CD4-positive, alpha-beta T cell (primary cell): ENCODE measurements at regions of chr5 and their contacts with region 1.

Region 1: DNA sequence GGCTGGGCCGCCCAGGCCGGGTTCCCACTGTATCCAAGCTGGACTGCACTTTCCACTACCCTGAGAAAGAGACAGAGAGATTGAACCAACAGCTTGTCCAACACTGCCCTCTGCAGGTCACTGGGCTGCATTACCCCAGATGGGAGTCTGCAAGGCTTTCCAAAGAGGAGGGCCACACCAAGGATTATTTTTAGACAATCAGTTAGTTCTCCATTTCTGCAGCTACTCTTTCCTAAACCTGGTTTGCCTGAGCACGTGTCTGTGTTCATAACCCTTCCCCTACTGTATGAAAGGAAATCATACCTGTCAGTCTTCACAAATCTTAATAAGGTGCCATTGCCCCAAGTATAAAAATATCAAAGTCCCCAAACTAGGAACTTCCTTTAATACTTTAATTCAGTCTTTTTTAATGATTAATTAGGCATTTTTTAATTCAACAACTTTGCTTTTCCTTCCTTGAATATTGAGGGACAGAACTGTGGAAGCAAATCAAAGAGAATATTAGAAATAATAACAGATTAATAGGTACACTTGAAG is 13.4 kb upstream of the FGF1 start:
- DNase-seq: peak; percentile 52 to 83 (median 72)
- ATAC-seq: peak; percentile 98
- H3K4me3 ChIP-seq: no peak overlapping the region
- H3K4me3 Mint-ChIP-seq: no peak overlapping the region
- H3K27ac ChIP-seq: no peak overlapping the region
- H3K27ac Mint-ChIP-seq: no peak overlapping the region
- H3K4me1 ChIP-seq: no peaks in the 10 kb centered on the region
- H3K4me1 Mint-ChIP-seq: no peaks in the 10 kb centered on the region
- H3K27me3 ChIP-seq: no peaks in the 10 kb centered on the region
- H3K27me3 Mint-ChIP-seq: no peaks in the 10 kb centered on the region
- CTCF ChIP-seq: peak; percentile 82

Region 2: DNA sequence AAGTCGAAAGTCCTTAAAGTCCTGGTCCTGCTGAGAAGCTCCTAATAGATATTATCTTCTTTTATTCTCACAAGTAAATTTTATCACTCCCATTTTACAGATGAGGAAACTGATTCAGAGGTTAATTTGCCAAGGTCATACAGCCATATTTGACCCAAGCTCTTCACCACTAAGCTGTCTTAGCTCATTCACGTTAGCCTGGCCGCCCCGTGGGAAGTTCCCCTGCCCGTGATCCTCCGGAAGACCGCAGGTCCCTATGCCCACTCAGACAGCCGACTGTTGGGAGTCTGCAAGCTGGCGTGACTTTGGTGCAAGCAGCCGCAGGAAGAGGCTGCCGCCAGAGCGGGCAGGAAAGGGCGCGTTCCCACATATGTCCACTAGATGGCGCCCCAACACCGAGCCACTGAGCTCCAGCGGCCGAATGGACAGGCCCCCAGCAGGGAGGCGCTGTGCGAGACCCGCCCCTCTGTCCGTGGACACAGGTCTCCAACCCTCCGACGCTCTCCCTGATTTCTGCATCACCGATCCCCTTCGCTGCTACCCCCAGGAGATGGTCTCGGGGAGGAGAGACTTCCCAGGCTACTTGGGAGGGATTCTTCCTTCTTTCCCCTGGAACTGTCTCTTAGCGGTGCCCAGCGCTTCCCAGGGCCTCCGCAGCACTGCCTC is 1007.3 kb before region 1 on chr5:
- CTCF ChIA-PET with region 1: no interaction called
- POLR2A ChIA-PET with region 1: no interaction called
- intact Hi-C with region 1: loop called (anchors 5 to 10 kb)
- DNase-seq: peak; percentile 66 to 92 (median 84)
- ATAC-seq: peak; percentile 68
- H3K4me3 ChIP-seq: peak overlapping the region; percentile 35
- H3K4me3 Mint-ChIP-seq: peak overlapping the region; percentile 57
- H3K27ac ChIP-seq: no peak overlapping the region
- H3K27ac Mint-ChIP-seq: no peak overlapping the region
- H3K4me1 ChIP-seq: peaks cover 20% of the 10 kb centered on the region
- H3K4me1 Mint-ChIP-seq: peaks cover 23% of the 10 kb centered on the region
- H3K27me3 ChIP-seq: no peaks in the 10 kb centered on the region
- H3K27me3 Mint-ChIP-seq: peaks cover 35% of the 10 kb centered on the region
- CTCF ChIP-seq: peak; percentile 98

Region 3: DNA sequence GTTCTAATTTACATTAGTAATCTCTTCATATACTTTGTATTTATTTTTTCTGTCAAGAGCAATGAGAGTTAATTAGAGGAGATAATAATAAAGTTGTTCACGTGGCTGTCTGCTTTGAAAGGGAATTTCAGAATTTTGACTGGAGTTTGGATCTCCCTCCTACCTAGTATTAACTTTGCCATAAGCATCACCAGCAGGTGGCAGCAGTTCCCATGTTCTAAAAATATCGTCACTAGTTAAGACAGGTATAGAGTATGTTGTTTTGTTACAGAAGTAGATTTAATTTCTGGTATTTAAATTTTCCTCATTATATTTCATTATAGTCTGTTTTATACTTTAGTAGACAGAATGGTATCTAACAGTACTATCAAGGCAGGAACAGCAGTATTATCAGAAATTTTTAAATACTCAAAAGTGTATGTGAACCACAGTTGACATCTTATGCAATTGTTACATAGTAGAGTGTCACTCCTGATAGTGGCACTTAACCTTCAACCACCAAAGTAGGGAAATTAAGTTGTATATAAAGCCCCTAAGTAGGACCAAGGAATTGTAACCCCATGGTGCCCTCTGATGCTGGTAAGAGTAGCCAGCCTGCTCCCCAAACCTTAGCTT is 706.8 kb before region 1 on chr5:
- CTCF ChIA-PET with region 1: interaction called, 3 read pairs
- POLR2A ChIA-PET with region 1: no interaction called
- intact Hi-C with region 1: loop called (anchors 1 to 2 kb)
- DNase-seq: peak; percentile 61 to 91 (median 78)
- ATAC-seq: peak; percentile 88
- H3K4me3 ChIP-seq: no peak overlapping the region
- H3K4me3 Mint-ChIP-seq: no peak overlapping the region
- H3K27ac ChIP-seq: no peak overlapping the region
- H3K27ac Mint-ChIP-seq: no peak overlapping the region
- H3K4me1 ChIP-seq: no peaks in the 10 kb centered on the region
- H3K4me1 Mint-ChIP-seq: peaks cover 6% of the 10 kb centered on the region
- H3K27me3 ChIP-seq: no peaks in the 10 kb centered on the region
- H3K27me3 Mint-ChIP-seq: no peaks in the 10 kb centered on the region
- CTCF ChIP-seq: peak; percentile 93

Region 4: GRCh38 chr5:142304013-142304701 is 395.1 kb before region 1 on chr5:
- CTCF ChIA-PET with region 1: no interaction called
- POLR2A ChIA-PET with region 1: no interaction called
- intact Hi-C with region 1: loop called in 1 of 2 experiments (anchors 10 kb)
- DNase-seq: no peak
- ATAC-seq: no peak
- H3K4me3 ChIP-seq: no peak overlapping the region
- H3K4me3 Mint-ChIP-seq: no peak overlapping the region
- H3K27ac ChIP-seq: no peak overlapping the region
- H3K27ac Mint-ChIP-seq: no peak overlapping the region
- H3K4me1 ChIP-seq: peaks cover 4% of the 10 kb centered on the region
- H3K4me1 Mint-ChIP-seq: peaks cover 10% of the 10 kb centered on the region
- H3K27me3 ChIP-seq: no peaks in the 10 kb centered on the region
- H3K27me3 Mint-ChIP-seq: no peaks in the 10 kb centered on the region
- CTCF ChIP-seq: no peak

Region 5: DNA sequence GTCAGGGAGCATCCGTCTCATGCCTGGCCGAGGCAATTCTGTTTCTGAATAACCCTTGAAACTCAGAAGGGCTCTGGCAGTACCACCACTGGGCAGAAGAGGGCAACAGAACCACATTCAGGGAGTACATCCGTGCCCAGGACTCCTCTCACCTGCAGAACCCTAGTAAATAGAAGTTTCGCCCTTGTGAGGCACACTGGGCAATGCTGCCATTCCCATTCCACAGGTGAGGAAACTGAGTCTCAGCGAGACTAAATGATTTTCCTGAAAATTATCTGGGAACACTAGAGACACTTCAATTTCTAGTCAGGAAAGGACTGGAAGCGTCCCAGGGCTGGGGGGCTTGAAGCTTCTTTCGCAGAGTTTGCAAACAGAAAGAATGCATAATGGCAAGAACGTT is 88.1 kb before region 1 on chr5:
- CTCF ChIA-PET with region 1: interaction called, 5 read pairs
- POLR2A ChIA-PET with region 1: no interaction called
- intact Hi-C with region 1: loop called (anchors 1 to 2 kb)
- DNase-seq: peak; percentile 34 to 70 (median 56)
- ATAC-seq: peak; percentile 94
- H3K4me3 ChIP-seq: no peak overlapping the region
- H3K4me3 Mint-ChIP-seq: no peak overlapping the region
- H3K27ac ChIP-seq: no peak overlapping the region
- H3K27ac Mint-ChIP-seq: no peak overlapping the region
- H3K4me1 ChIP-seq: no peaks in the 10 kb centered on the region
- H3K4me1 Mint-ChIP-seq: no peaks in the 10 kb centered on the region
- H3K27me3 ChIP-seq: peaks cover 0 to 3% of the 10 kb centered on the region in 2 experiments
- H3K27me3 Mint-ChIP-seq: peaks cover 34% of the 10 kb centered on the region
- CTCF ChIP-seq: peak; percentile 77

Region 6: DNA sequence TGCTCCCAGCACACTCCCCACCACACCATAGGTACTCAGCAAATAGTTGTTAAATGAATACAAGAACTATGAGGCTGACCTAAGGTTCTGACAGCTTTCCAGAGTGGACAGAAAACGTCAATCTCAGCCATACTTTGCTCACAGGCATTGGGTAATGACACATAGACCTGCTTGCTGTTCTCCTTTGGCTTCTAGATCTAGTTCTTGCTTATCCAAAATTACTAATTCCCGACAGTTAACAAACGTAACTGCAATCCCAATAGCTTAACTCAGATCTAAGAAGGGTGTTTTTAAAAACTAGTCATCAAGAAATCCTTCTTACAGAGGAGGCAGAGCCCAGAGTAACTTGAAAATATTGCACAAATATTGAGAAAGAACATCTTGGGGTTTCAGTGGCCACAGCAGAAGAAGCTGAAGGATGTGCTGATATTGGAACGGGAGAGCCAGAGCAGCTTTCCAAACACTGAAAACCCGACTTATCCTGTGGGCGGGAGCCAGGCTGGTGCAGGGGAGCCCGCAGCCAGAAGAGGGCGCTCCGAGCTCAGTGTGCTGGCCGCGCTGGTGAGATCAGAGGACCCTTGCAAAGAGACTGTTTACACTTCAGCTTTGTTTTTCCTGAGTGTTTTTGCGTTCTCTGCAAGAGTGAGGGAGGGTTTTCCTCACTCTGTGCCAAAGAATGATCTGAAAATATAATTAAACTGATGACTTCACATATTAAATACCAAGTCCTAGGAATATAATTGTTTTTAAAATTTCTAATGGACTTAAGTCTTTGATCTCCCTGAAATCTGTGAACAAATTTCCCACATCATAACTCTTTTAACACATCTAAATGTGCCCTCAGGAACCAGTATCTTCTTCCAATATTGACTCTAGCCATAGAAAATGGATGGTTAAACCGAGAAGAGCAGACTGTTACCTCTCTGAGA is 43.6 kb before region 1 on chr5:
- CTCF ChIA-PET with region 1: interaction called, 15 read pairs
- POLR2A ChIA-PET with region 1: no interaction called
- intact Hi-C with region 1: loop called (anchors 2 kb)
- DNase-seq: peak; percentile 43 to 78 (median 60)
- ATAC-seq: peak; percentile 87
- H3K4me3 ChIP-seq: no peak overlapping the region
- H3K4me3 Mint-ChIP-seq: no peak overlapping the region
- H3K27ac ChIP-seq: no peak overlapping the region
- H3K27ac Mint-ChIP-seq: no peak overlapping the region
- H3K4me1 ChIP-seq: no peaks in the 10 kb centered on the region
- H3K4me1 Mint-ChIP-seq: peaks cover 8% of the 10 kb centered on the region
- H3K27me3 ChIP-seq: peaks cover 3 to 6% of the 10 kb centered on the region in 2 experiments
- H3K27me3 Mint-ChIP-seq: peaks cover 16% of the 10 kb centered on the region
- CTCF ChIP-seq: peak; percentile 93

Region 7: DNA sequence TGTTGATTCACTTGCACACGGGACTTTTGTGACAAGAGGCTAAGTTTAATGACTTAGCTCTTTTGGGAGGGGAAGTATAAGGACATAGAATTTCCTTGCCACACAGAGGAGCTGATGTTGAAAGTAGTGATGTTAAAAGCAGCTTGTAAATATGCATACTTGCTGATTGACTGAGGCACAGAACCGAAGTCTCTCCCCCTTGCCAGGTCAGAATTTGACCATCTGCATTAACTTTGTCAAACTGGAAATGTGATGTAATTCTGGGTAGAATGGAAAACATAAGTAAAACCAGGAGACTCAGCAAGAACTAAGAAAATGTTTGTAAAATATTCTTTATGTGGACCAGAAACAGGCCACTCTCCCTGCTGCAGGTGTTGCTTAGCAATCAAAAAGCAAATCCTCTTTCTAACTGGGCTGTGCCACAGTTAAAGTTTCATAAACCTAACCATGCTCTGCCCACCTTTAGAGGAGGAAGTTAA is 420.1 kb after region 1 on chr5:
- CTCF ChIA-PET with region 1: no interaction called
- POLR2A ChIA-PET with region 1: no interaction called
- intact Hi-C with region 1: no loop called
- DNase-seq: peak in 2 of 14 experiments; percentile 22 to 40
- ATAC-seq: no peak
- H3K4me3 ChIP-seq: no peak overlapping the region
- H3K4me3 Mint-ChIP-seq: no peak overlapping the region
- H3K27ac ChIP-seq: no peak overlapping the region
- H3K27ac Mint-ChIP-seq: no peak overlapping the region
- H3K4me1 ChIP-seq: no peaks in the 10 kb centered on the region
- H3K4me1 Mint-ChIP-seq: no peaks in the 10 kb centered on the region
- H3K27me3 ChIP-seq: no peaks in the 10 kb centered on the region
- H3K27me3 Mint-ChIP-seq: no peaks in the 10 kb centered on the region
- CTCF ChIP-seq: no peak